GM23248 (cell line): ENCODE measurements at regions of chr1 and their contacts with region 1.

Region 1: DNA sequence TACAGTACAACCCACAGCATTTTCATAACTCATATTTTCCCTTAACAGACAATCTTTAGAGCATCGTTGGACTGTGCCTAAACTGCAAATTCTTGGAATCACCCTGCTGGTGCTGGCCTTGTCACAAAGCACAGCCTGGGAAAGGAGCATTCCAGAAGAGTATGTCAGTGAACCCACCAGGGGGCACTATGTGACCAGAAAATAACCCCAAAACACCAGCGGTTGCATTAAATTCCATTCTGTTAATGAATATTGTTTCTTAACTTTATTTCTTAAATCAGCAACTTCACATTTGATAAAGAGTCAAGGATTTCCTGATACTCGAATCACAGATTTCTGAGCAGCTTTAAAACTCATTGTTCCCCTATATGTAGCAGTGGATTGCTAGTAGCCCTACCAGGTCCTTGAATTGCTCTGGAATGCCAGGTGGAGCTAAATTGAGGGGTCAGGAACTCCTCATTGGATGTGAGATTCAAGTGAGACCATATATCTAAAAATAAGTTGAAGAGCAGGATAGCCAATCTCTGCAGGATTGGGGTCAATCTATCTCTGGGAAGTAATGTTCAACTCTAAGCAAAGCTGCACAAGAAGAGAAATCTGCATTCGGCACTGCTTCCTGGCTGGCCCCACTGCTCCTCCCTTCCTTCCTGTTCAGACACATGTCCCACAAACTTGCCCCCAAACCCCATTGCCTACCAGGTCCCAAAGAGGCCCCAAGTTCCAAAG is 12.7 kb upstream of the RAB4A start:
- DNase-seq: peak; percentile 82
- H3K4me3 ChIP-seq: no peak overlapping the region
- H3K27ac ChIP-seq: no peak overlapping the region
- H3K4me1 ChIP-seq: no peaks in the 10 kb centered on the region
- H3K27me3 ChIP-seq: 0 out of 2 replicates have a peak, but pooled peaks cover 8% of the 10 kb centered on the region

Region 2: DNA sequence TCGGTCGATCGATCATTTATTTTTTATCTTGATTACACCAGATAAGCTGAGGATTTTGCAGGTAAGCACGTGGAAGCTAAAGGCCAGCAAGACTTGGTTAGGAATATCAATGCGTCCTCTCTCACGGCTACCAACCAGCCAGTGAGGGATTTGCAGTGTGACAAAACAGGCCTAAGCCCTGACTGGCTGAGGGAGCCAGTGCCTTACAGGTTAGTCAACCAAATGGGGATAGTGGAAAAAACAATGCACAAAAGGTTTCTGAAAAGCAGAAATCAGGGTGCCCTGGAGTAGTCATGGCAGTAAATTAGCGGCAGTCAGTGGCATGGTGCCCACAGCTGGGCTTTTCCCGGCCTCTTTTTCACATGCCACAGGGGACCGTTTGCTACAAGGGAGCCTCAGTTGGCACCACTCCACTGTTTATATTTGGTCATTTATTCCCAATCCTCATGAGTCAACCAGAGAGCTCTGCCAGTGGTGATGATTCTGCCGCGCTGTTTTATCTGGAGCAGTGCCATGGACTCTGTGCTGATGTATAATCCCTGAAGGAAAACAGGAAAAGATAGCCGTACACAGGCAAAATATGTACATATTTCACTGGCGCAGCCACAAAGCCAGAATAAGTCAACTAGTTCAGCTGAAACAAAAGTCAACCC is 355.3 kb before region 1 on chr1:
- in situ Hi-C with region 1: no loop called
- DNase-seq: peak; percentile 98
- H3K4me3 ChIP-seq: no peak overlapping the region
- H3K27ac ChIP-seq: 0 out of 2 replicates have a peak overlapping the region, but pooled peaks have one; percentile 14
- H3K4me1 ChIP-seq: peaks cover 11% of the 10 kb centered on the region
- H3K27me3 ChIP-seq: peaks cover 22% of the 10 kb centered on the region; the same call in 1 of the 2 replicates

Region 3: GRCh38 chr1:229479660-229480399 is 221.6 kb after region 1 on chr1:
- in situ Hi-C with region 1: loop called (anchors 10 kb)
- DNase-seq: no peak
- H3K4me3 ChIP-seq: no peak overlapping the region
- H3K27ac ChIP-seq: no peak overlapping the region
- H3K4me1 ChIP-seq: no peaks in the 10 kb centered on the region
- H3K27me3 ChIP-seq: no peaks in the 10 kb centered on the region